Breast epithelium (tissue), 4 donors: ENCODE measurements at regions of chr16 and their contacts with region 1.

Region 1: DNA sequence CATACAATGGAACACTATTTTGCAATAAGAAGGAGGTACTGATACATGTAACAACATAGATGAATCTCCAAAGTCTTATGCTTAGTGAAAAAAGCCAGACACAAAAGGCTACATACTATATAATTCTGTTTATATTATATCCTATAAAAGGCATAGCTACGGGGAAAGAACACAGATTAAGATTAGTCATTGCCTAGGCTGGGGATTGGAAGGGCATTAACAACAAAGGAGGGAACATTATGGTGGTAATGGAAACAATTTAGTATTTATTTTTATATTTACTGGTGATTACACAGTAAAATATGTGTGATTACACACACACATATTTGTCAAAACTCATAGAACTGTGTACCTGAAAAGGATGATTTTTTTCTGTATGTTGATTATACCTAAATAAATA is 278.1 kb downstream of the ZFHX3 start:
- DNase-seq: no peak
- H3K4me3 ChIP-seq: no peak overlapping the region
- H3K27ac ChIP-seq: no peak overlapping the region
- H3K4me1 ChIP-seq: no peaks in the 10 kb centered on the region
- H3K27me3 ChIP-seq: no peaks in the 10 kb centered on the region
- CTCF ChIP-seq: no peak
- POLR2A ChIP-seq: no peak

Region 2: DNA sequence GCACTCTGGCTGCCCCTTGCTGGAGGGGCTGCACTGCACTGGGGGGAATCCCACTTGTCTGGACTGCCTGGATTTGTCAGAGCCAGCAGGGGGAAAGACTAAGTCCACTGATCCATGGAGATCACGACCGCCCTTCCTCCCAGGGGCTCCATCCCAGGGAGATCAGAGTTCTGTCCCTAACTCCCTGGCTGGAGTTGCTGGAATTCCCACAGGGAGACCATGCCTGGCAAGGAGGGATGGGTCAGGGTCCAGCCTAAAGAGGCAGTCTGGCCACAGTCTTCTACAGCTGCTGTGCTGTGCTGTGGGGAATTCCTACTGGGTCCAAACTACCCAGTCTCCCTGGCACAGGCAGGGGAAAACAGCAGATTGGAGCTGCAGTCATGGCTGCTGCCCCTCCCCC is 33.8 kb before region 1 on chr16:
- intact Hi-C with region 1: loop called (anchors 2 kb)
- DNase-seq: no peak
- H3K4me3 ChIP-seq: no peak overlapping the region
- H3K27ac ChIP-seq: no peak overlapping the region
- H3K4me1 ChIP-seq: no peaks in the 10 kb centered on the region
- H3K27me3 ChIP-seq: no peaks in the 10 kb centered on the region
- CTCF ChIP-seq: no peak
- POLR2A ChIP-seq: no peak